ENCODE measurements at regions of chr1 and their contacts with region 1.

Region 1: GRCh38 chr1:37989361-37989930 is 376 bp downstream of the SF3A3 start:
- DNase-seq: peak; percentile 51
- H3K4me3 ChIP-seq: peak overlapping the region; percentile 59 to 99 (median 98)
- H3K27ac ChIP-seq: peak overlapping the region; percentile 81
- H3K4me1 ChIP-seq: peaks cover 14% of the 10 kb centered on the region
- H3K27me3 ChIP-seq: no peaks in the 10 kb centered on the region
- CTCF ChIP-seq: no peak

Region 2: DNA sequence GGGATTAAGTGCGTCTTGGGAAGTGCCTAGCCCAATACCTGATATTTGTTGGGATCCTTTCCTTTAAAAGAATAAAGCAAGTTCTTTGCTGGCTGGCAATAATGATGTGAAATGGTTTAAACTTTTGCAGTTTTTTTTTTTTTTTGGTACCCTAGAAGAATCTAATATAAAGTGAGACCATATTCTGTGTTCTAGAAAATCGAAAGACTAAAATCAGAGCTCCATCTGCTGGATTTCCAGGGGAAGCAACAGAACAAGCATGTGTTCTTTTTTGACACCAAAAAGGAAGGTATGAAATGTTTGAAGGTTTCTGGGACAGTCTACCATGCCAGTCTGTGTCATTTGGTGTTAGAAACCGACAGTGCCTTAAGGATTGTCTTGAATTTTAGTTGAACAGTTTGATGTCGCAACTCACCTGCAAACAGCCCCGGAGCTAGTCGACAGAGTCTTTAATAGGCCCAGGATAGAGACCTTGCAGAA is 29.5 kb after region 1 on chr1:
- CTCF ChIA-PET with region 1: no interaction called
- dilution Hi-C with region 1: no loop called
- in situ Hi-C with region 1: no loop called
- intact Hi-C with region 1: loop called (anchors 1 kb)
- DNase-seq: no peak
- H3K4me3 ChIP-seq: no peak overlapping the region
- H3K27ac ChIP-seq: no peak overlapping the region
- H3K4me1 ChIP-seq: peaks cover 6% of the 10 kb centered on the region
- H3K27me3 ChIP-seq: no peaks in the 10 kb centered on the region
- CTCF ChIP-seq: peak; percentile 61 to 65

Measured in mammary epithelial cell (primary cell).